CD4-positive, alpha-beta memory T cell (primary cell): ENCODE measurements at regions of chr17 and their contacts with region 1.

Region 1: GRCh38 chr17:56891784-56892183 is 22.1 kb downstream of the TRIM25 start:
- DNase-seq: peak; percentile 20 to 44 (median 33)
- H3K4me3 ChIP-seq: no peak overlapping the region
- H3K4me3 Mint-ChIP-seq: no peak overlapping the region
- H3K27ac ChIP-seq: no peak overlapping the region
- H3K27ac Mint-ChIP-seq: no peak overlapping the region
- H3K4me1 ChIP-seq: no peaks in the 10 kb centered on the region
- H3K4me1 Mint-ChIP-seq: peaks cover 0 to 3% (median 0%) of the 10 kb centered on the region in 4 donors
- H3K27me3 ChIP-seq: no peaks in the 10 kb centered on the region
- H3K27me3 Mint-ChIP-seq: no peaks in the 10 kb centered on the region

Region 2: GRCh38 chr17:56908001-56908542 is 16.3 kb after region 1 on chr17:
- CTCF ChIA-PET with region 1: interaction called, 11 read pairs
- POLR2A ChIA-PET with region 1: interaction called, 5 read pairs
- intact Hi-C with region 1: no loop called
- DNase-seq: peak in 3 of 5 donors; percentile 15 to 28 (median 24)
- H3K4me3 ChIP-seq: no peak overlapping the region
- H3K4me3 Mint-ChIP-seq: peak overlapping the region in 4 of 8 donors; percentile 11 to 66 (median 35)
- H3K27ac ChIP-seq: no peak overlapping the region
- H3K27ac Mint-ChIP-seq: peak overlapping the region; percentile 73 to 91 (median 84)
- H3K4me1 ChIP-seq: peaks cover 47% of the 10 kb centered on the region
- H3K4me1 Mint-ChIP-seq: peaks cover 44 to 59% (median 50%) of the 10 kb centered on the region in 4 donors
- H3K27me3 ChIP-seq: no peaks in the 10 kb centered on the region
- H3K27me3 Mint-ChIP-seq: no peaks in the 10 kb centered on the region

Region 3: GRCh38 chr17:56913864-56914640 is 22.3 kb after region 1 on chr17 and contains the start of gene TRIM25:
- CTCF ChIA-PET with region 1: interaction called, 11 read pairs
- POLR2A ChIA-PET with region 1: interaction called, 5 read pairs
- intact Hi-C with region 1: no loop called
- DNase-seq: peak; percentile 75 to 93 (median 80)
- H3K4me3 ChIP-seq: peak within 1 kb of the TSS; percentile 79 to 91
- H3K4me3 Mint-ChIP-seq: peak within 1 kb of the TSS; percentile 80 to 97 (median 90)
- H3K27ac ChIP-seq: peak within 1 kb of the TSS; percentile 85
- H3K27ac Mint-ChIP-seq: peak within 1 kb of the TSS; percentile 78 to 98 (median 94)
- H3K4me1 ChIP-seq: peaks cover 43% of the 10 kb centered on the region
- H3K4me1 Mint-ChIP-seq: peaks cover 33 to 44% (median 40%) of the 10 kb centered on the region in 4 donors
- H3K27me3 ChIP-seq: no peaks in the 10 kb centered on the region
- H3K27me3 Mint-ChIP-seq: no peaks in the 10 kb centered on the region
- total RNA-seq, gene TRIM25: 58.4 to 62.7 TPM

Region 4: DNA sequence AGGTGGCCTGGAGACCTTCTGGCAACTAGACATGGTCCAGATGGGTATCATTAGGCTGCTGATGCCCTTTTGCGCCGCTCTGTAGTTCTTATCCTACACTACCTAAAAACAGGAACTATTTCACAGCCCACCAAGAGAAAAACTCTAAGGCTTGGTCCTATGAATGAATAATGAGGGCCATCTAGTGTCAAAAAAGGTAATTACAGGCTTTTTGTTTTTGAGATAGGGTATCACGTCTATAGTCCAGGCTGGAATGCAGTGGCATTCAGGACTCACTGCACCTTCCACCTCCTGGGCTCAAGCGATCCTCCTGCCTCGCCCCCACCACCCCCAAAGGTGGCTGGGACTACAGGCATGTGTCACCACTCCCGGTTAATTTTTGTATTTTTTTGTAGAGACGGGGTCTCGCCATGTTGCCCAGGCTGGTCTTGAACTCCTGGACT is 48.1 kb after region 1 on chr17:
- CTCF ChIA-PET with region 1: interaction called, 53 read pairs
- POLR2A ChIA-PET with region 1: no interaction called
- intact Hi-C with region 1: loop called (anchors 1 kb)
- DNase-seq: peak in 4 of 5 donors; percentile 42 to 57 (median 53)
- H3K4me3 ChIP-seq: no peak overlapping the region
- H3K4me3 Mint-ChIP-seq: no peak overlapping the region
- H3K27ac ChIP-seq: no peak overlapping the region
- H3K27ac Mint-ChIP-seq: peak overlapping the region in 3 of 7 donors; percentile 51 to 81 (median 59)
- H3K4me1 ChIP-seq: no peaks in the 10 kb centered on the region
- H3K4me1 Mint-ChIP-seq: peaks cover 0 to 5% (median 0%) of the 10 kb centered on the region in 4 donors
- H3K27me3 ChIP-seq: no peaks in the 10 kb centered on the region
- H3K27me3 Mint-ChIP-seq: no peaks in the 10 kb centered on the region

Region 5: DNA sequence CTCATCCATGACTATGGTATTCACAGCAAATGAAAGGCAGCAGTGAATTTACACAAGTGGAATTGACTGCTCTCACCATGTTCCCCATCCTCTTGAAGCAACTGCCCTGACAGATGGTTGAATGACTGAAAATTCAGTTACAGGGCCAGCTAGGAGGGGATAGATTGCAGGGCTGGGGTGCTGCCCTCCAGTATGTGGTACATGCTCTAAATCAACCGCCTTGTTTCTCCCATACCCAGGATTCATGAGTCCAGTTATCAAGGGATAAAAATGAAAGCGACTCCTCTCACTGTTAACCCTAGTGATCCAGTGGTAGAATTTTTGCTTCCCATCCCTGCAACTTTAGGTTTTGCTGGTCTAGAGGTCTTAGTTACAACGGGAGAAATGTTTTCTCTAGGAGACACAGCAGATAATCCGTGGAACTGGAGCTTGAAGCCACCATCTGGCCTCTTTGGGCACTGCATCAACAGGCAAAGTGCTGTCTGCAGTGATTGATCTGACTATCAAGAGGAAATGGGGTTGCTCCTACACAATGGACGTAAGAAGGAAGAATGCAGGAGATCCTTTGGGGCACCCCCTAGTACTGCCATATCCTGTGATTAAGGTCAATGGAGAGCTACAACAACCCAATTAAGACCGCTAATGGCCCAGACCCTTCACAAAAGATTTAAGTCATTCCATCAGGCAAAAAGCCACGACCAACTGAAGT is 118.1 kb after region 1 on chr17:
- CTCF ChIA-PET with region 1: no interaction called
- POLR2A ChIA-PET with region 1: no interaction called
- intact Hi-C with region 1: no loop called
- DNase-seq: peak; percentile 28 to 61 (median 40)
- H3K4me3 ChIP-seq: no peak overlapping the region
- H3K4me3 Mint-ChIP-seq: peak overlapping the region; percentile 3 to 68 (median 43)
- H3K27ac ChIP-seq: no peak overlapping the region
- H3K27ac Mint-ChIP-seq: peak overlapping the region in 2 of 7 donors; percentile 1 to 3
- H3K4me1 ChIP-seq: peaks cover 6% of the 10 kb centered on the region
- H3K4me1 Mint-ChIP-seq: peaks cover 5 to 7% (median 6%) of the 10 kb centered on the region in 4 donors
- H3K27me3 ChIP-seq: no peaks in the 10 kb centered on the region
- H3K27me3 Mint-ChIP-seq: peaks cover 0 to 3% of the 10 kb centered on the region in 2 donors